ENCODE measurements at regions of chr12 and their contacts with region 1.

Region 1: GRCh38 chr12:125183187-125184067 is 118.2 kb downstream of the AACS start:
- DNase-seq: peak; percentile 21
- ATAC-seq: peak; percentile 92
- H3K4me3 ChIP-seq: no peak overlapping the region
- H3K27ac ChIP-seq: no peak overlapping the region
- H3K4me1 ChIP-seq: no peaks in the 10 kb centered on the region
- H3K27me3 ChIP-seq: peaks cover 8 to 11% of the 10 kb centered on the region in 2 experiments
- CTCF ChIP-seq: peak; percentile 98 to 100 (median 99)
- EP300 ChIP-seq: no peak
- POLR2A ChIP-seq: no peak
- RAD21 ChIP-seq: peak; percentile 99

Region 2: GRCh38 chr12:125402874-125403789 is 219.7 kb after region 1 on chr12:
- CTCF ChIA-PET with region 1: interaction called, 28 read pairs
- POLR2A ChIA-PET with region 1: no interaction called
- RAD21 ChIA-PET with region 1: interaction called, 9 read pairs
- SMC1A ChIA-PET with region 1: interaction called, 3 read pairs
- in situ Hi-C with region 1: loop called (anchors 5 kb)
- intact Hi-C with region 1: loop called (anchors 1 kb)
- DNase-seq: no peak
- ATAC-seq: peak; percentile 62
- H3K4me3 ChIP-seq: no peak overlapping the region
- H3K27ac ChIP-seq: no peak overlapping the region
- H3K4me1 ChIP-seq: peaks cover 14% of the 10 kb centered on the region
- H3K27me3 ChIP-seq: peaks cover 0 to 6% of the 10 kb centered on the region in 2 experiments; a peak in 2 of 4 replicates
- CTCF ChIP-seq: peak; percentile 46 to 62 (median 55); a peak in 5 of 6 replicates
- EP300 ChIP-seq: no peak
- POLR2A ChIP-seq: no peak
- RAD21 ChIP-seq: peak; percentile 75

Region 3: DNA sequence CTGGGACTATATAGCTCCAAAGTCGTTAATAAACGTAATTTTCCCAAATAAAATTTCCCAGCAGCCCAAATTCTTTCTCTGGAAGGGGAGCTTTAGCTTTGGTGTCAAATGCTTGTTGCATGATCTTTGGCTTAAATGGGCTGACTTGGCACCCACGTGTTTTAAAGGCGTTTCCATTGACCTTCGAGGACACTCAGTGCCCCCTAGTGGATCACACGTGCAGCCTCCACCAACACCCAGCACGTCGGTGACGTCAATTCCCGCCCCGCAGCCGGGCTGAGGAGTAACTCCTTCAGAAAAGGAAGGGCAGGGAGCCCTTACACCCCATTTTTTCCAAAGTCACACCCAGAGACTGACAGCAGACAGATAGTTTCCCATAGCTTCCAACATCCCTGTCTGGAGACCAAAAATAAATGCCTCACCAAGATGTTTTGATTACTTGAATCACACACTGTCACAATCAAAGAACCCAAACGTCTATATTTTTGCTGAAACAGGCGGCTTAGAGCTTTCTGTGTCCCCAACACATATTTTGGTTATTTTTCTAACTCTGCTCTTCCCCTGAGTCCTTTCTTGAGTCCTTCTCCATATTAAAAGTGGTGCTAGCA is 589.7 kb after region 1 on chr12:
- CTCF ChIA-PET with region 1: no interaction called
- POLR2A ChIA-PET with region 1: no interaction called
- RAD21 ChIA-PET with region 1: no interaction called
- SMC1A ChIA-PET with region 1: no interaction called
- in situ Hi-C with region 1: no loop called
- intact Hi-C with region 1: loop called (anchors 10 kb)
- DNase-seq: no peak
- ATAC-seq: peak; percentile 76
- H3K4me3 ChIP-seq: no peak overlapping the region
- H3K27ac ChIP-seq: no peak overlapping the region
- H3K4me1 ChIP-seq: no peaks in the 10 kb centered on the region
- H3K27me3 ChIP-seq: no peaks in the 10 kb centered on the region
- CTCF ChIP-seq: peak; percentile 46 to 52 (median 50); a peak in 5 of 6 replicates
- EP300 ChIP-seq: no peak
- POLR2A ChIP-seq: no peak
- RAD21 ChIP-seq: peak; percentile 47

Region 4: GRCh38 chr12:126747530-126748149 is 1564.2 kb after region 1 on chr12:
- CTCF ChIA-PET with region 1: no interaction called
- POLR2A ChIA-PET with region 1: no interaction called
- RAD21 ChIA-PET with region 1: no interaction called
- SMC1A ChIA-PET with region 1: no interaction called
- in situ Hi-C with region 1: no loop called
- intact Hi-C with region 1: loop called (anchors 5 kb)
- DNase-seq: no peak
- ATAC-seq: peak; percentile 73
- H3K4me3 ChIP-seq: no peak overlapping the region
- H3K27ac ChIP-seq: no peak overlapping the region
- H3K4me1 ChIP-seq: no peaks in the 10 kb centered on the region
- H3K27me3 ChIP-seq: no peaks in the 10 kb centered on the region
- CTCF ChIP-seq: peak; percentile 55 to 76 (median 65)
- EP300 ChIP-seq: no peak
- POLR2A ChIP-seq: no peak
- RAD21 ChIP-seq: peak; percentile 40

Measured in GM12878 (cell line).